ENCODE measurements at regions of chr2 and their contacts with region 1.

Region 1: DNA sequence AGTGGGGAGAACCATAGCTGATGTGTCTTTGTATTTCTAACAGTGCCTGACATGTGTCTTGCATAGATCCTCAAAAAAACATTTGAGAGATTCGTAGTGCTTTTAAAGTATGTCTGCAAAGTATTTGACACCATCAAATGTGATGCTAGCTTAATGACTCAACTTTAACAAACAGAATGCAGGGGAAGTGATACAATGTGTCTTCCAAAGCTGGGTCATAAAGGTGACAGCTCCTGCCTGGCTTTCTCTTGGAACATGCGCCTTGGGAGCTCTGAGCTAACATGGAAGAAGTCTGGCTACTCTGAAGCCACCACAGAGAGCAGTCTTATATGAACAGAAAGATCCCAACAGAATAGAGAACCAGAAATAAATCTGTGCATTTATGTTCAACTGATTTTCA is 78.2 kb downstream of the C1D start:
- DNase-seq: no peak
- H3K4me3 Mint-ChIP-seq: no peak overlapping the region
- H3K27ac Mint-ChIP-seq: no peak overlapping the region
- H3K4me1 Mint-ChIP-seq: no peaks in the 10 kb centered on the region
- H3K27me3 Mint-ChIP-seq: no peaks in the 10 kb centered on the region
- CTCF ChIP-seq: no peak

Region 2: GRCh38 chr2:67625690-67626475 is 358.7 kb before region 1 on chr2:
- CTCF ChIA-PET with region 1: no interaction called
- POLR2A ChIA-PET with region 1: no interaction called
- intact Hi-C with region 1: no loop called
- DNase-seq: no peak
- H3K4me3 Mint-ChIP-seq: no peak overlapping the region
- H3K27ac Mint-ChIP-seq: peak overlapping the region; percentile 72
- H3K4me1 Mint-ChIP-seq: peaks cover 14% of the 10 kb centered on the region
- H3K27me3 Mint-ChIP-seq: no peaks in the 10 kb centered on the region
- CTCF ChIP-seq: no peak

Region 3: GRCh38 chr2:67954093-67954748 is 30.4 kb before region 1 on chr2:
- CTCF ChIA-PET with region 1: no interaction called
- POLR2A ChIA-PET with region 1: no interaction called
- intact Hi-C with region 1: no loop called
- DNase-seq: peak; percentile 64
- H3K4me3 Mint-ChIP-seq: no peak overlapping the region
- H3K27ac Mint-ChIP-seq: no peak overlapping the region
- H3K4me1 Mint-ChIP-seq: peaks cover 17% of the 10 kb centered on the region
- H3K27me3 Mint-ChIP-seq: no peaks in the 10 kb centered on the region
- CTCF ChIP-seq: no peak

Region 4: GRCh38 chr2:67997528-67997900 is 12.9 kb after region 1 on chr2:
- CTCF ChIA-PET with region 1: interaction called, 3 read pairs
- POLR2A ChIA-PET with region 1: interaction called, 13 read pairs
- intact Hi-C with region 1: no loop called
- DNase-seq: peak; percentile 66
- H3K4me3 Mint-ChIP-seq: peak overlapping the region; percentile 54
- H3K27ac Mint-ChIP-seq: peak overlapping the region; percentile 56
- H3K4me1 Mint-ChIP-seq: peaks cover 16% of the 10 kb centered on the region
- H3K27me3 Mint-ChIP-seq: no peaks in the 10 kb centered on the region
- CTCF ChIP-seq: no peak

Region 5: GRCh38 chr2:68074050-68074449 is 89.5 kb after region 1 on chr2:
- CTCF ChIA-PET with region 1: no interaction called
- POLR2A ChIA-PET with region 1: no interaction called
- intact Hi-C with region 1: no loop called
- DNase-seq: no peak
- H3K4me3 Mint-ChIP-seq: no peak overlapping the region
- H3K27ac Mint-ChIP-seq: no peak overlapping the region
- H3K4me1 Mint-ChIP-seq: no peaks in the 10 kb centered on the region
- H3K27me3 Mint-ChIP-seq: no peaks in the 10 kb centered on the region
- CTCF ChIP-seq: no peak